ENCODE measurements at regions of chr14 and their contacts with region 1.

Region 1: DNA sequence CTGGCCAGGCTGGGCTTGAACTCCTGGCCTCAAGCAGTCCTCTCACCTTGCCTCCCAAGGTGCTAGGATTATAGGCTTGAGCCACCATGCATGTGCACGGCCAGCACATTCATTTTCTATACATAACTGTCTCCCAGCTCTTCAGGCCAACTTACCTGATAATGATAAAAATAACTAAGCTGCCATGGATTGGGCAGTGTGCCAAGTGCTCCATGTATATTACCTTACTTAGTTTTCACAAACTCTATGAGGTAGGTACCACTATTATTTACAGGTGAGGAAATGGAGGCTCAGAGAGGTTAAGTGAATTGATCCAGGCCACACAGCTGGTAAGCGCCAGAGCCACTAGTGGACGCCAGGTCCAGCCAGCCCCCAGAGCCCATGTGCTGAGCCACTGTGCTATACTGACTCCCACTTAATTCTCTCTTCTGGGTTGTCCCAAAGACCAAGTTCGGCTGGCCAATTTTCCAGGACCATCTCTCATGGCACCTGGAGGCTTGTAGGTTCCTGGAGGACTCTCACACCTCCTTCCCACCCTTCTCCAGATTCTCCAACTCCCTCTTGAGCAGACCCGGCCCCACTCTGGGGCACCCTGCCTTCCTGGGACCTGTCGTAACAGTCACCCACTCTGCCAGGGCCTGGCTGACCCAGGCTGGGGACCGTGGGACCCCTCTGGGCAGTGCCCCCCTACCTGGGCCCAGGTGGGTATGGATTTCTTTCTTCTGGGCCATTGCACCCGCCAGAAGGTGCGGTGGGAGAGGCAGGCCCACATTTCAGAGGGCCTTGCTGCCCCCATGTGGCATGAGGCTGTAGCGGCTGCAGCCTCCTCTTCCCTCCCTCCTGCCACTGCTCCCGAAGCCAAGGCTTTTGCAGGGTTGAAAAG is 30.2 kb upstream of the CIPC start:
- DNase-seq: peak; percentile 70 to 73 (median 71)
- ATAC-seq: peak; percentile 82 to 88 (median 86)
- H3K4me3 ChIP-seq: no peak overlapping the region
- H3K27ac ChIP-seq: no peak overlapping the region
- H3K4me1 ChIP-seq: peaks cover 0 to 14% (median 2%) of the 10 kb centered on the region in 4 donors
- H3K27me3 ChIP-seq: no peaks in the 10 kb centered on the region
- CTCF ChIP-seq: peak; percentile 89 to 92 (median 90)
- POLR2A ChIP-seq: no peak

Region 2: GRCh38 chr14:76863724-76864407 is 204.0 kb before region 1 on chr14:
- intact Hi-C with region 1: no loop called
- DNase-seq: peak in 1 of 3 donors; percentile 50
- ATAC-seq: peak; percentile 72 to 78 (median 74)
- H3K4me3 ChIP-seq: no peak overlapping the region
- H3K27ac ChIP-seq: no peak overlapping the region
- H3K4me1 ChIP-seq: no peaks in the 10 kb centered on the region
- H3K27me3 ChIP-seq: no peaks in the 10 kb centered on the region
- CTCF ChIP-seq: no peak
- POLR2A ChIP-seq: no peak

Region 3: DNA sequence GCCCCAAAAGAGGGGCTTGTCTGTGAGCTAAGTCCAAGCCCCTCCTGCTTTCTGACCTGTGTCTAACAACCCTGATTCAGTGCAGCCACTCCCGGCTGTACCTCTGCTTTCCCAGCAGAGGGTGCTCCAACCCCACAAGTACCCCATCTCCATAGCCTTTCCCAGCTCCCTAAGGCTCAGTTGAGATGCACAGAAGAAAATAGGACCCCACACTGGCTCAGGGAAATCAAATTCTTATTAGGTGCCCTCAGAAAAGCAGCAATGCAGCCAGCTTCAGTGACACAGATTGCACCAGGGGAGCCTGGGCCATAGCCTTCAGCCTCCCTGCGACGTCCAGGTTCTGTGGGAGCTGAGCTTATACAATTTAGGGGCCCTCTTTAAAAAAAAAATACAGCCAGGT is 191.8 kb before region 1 on chr14:
- intact Hi-C with region 1: loop called (anchors 5 to 10 kb)
- DNase-seq: peak in 2 of 3 donors; percentile 53 to 66
- ATAC-seq: peak; percentile 93 to 98 (median 94)
- H3K4me3 ChIP-seq: no peak overlapping the region
- H3K27ac ChIP-seq: no peak overlapping the region
- H3K4me1 ChIP-seq: no peaks in the 10 kb centered on the region
- H3K27me3 ChIP-seq: no peaks in the 10 kb centered on the region
- CTCF ChIP-seq: peak; percentile 94 to 96 (median 95)
- POLR2A ChIP-seq: no peak

Region 4: DNA sequence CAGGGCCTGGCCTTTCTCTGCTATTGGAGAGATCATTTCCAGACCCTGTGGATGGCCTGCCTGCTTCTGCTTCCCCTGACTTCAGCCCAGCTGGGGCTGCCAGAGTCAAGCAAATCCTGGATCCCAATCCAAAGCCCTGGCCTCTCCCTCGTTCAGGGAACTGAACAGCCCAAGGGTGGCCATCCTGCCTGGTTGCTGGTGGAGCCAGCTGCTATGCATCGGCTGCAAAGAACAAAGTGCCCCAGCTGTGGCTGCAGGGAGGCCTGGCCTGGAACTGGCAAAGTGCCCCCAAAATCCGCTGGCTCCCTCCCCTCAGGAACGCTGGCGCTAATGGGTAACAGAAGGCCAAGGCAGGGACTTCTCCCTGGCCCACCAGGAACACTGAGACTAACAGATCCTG is 185.2 kb before region 1 on chr14:
- intact Hi-C with region 1: loop called (anchors 5 to 10 kb)
- DNase-seq: no peak
- ATAC-seq: no peak
- H3K4me3 ChIP-seq: no peak overlapping the region
- H3K27ac ChIP-seq: no peak overlapping the region
- H3K4me1 ChIP-seq: no peaks in the 10 kb centered on the region
- H3K27me3 ChIP-seq: no peaks in the 10 kb centered on the region
- CTCF ChIP-seq: no peak
- POLR2A ChIP-seq: no peak

Region 5: GRCh38 chr14:76910371-76910890 is 157.4 kb before region 1 on chr14:
- intact Hi-C with region 1: loop called (anchors 5 to 10 kb)
- DNase-seq: no peak
- ATAC-seq: no peak
- H3K4me3 ChIP-seq: no peak overlapping the region
- H3K27ac ChIP-seq: no peak overlapping the region
- H3K4me1 ChIP-seq: peaks cover 0 to 8% (median 5%) of the 10 kb centered on the region in 4 donors
- H3K27me3 ChIP-seq: no peaks in the 10 kb centered on the region
- CTCF ChIP-seq: no peak
- POLR2A ChIP-seq: no peak

Region 6: GRCh38 chr14:76918751-76919543 is 148.9 kb before region 1 on chr14:
- intact Hi-C with region 1: loop called (anchors 5 to 10 kb)
- DNase-seq: peak; percentile 93 to 97 (median 95)
- ATAC-seq: peak; percentile 85 to 90 (median 88)
- H3K4me3 ChIP-seq: peak overlapping the region in 1 of 3 donors; percentile 14
- H3K27ac ChIP-seq: peak overlapping the region; percentile 72 to 82 (median 81)
- H3K4me1 ChIP-seq: peaks cover 0 to 32% (median 15%) of the 10 kb centered on the region in 4 donors
- H3K27me3 ChIP-seq: no peaks in the 10 kb centered on the region
- CTCF ChIP-seq: peak in 2 of 4 donors; percentile 8
- POLR2A ChIP-seq: peak; percentile 42